ENCODE measurements at regions of chr7 and their contacts with region 1.

Region 1: GRCh38 chr7:114217026-114217425 is 197.6 kb upstream of the FOXP2 start:
- DNase-seq: no peak
- H3K4me3 ChIP-seq: no peak overlapping the region
- H3K27ac ChIP-seq: no peak overlapping the region
- H3K27me3 ChIP-seq: peaks cover 0 to 4% (median 0%) of the 10 kb centered on the region in 45 donors
- CTCF ChIP-seq: peak in 5 of 56 donors; percentile 7 to 13 (median 10)

Region 2: DNA sequence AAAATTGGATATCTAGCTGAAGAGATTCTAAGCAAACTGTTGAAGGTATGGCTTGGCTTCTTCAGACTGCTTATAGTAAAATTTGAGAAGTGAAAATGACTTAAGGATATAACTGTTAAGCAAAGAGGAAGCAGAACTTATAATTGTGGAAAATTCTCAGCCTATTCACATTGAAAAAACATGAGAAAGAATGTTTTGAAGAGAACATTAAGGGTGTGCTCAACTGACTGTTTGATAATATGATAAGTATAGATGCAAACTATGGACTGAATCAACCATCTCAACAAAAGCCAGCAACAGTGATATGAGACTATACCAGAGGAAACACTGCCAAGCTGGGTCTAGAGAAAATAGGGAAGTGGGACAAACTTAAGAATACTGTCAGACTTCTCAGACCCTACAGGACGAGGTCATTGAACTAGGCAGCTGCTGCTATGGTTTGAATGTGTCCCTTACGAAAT is 165.1 kb before region 1 on chr7:
- intact Hi-C with region 1: loop called in 1 of 2 experiments (anchors 10 kb)
- DNase-seq: no peak
- H3K4me3 ChIP-seq: no peak overlapping the region
- H3K27ac ChIP-seq: no peak overlapping the region
- H3K27me3 ChIP-seq: no peaks in the 10 kb centered on the region
- CTCF ChIP-seq: no peak